HepG2 (cell line): ENCODE measurements at regions of chr4 and their contacts with region 1.

Region 1: DNA sequence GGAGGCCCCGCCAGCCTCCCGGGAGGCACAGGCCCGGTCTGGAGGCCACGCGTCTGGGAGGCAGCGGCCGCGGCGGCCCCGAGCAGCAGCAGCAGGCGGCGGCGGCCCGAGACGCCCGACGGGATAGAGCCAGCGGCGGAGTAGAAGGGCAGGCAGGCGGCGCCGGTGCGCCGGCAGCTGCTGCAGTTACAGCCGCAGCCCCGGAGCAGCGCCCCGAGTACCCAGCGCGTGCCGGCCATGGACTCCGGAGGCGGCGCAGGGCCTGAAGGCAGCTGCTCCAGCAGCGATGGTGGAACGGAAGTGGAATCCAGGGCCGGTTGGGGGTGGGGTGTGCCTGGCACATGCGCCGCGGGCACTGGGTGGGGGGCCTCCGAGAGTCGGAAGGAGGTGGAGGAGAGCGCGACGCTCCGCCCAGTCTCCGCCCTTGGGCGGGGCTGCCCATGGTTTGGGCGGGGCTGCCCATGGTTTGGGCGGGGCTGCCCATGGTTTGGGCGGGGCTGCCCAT is at the start of gene GRSF1:
- DNase-seq: peak; percentile 79
- ATAC-seq: peak; percentile 91
- H3K4me3 ChIP-seq: peak within 1 kb of the TSS; percentile 88 to 91 (median 90)
- H3K27ac ChIP-seq: peak within 1 kb of the TSS; percentile 75
- H3K4me1 ChIP-seq: peaks cover 31% of the 10 kb centered on the region
- H3K27me3 ChIP-seq: no peaks in the 10 kb centered on the region
- CTCF ChIP-seq: 0 out of 2 replicates have a peak, but pooled peaks have one; percentile 13
- EP300 ChIP-seq: no peak
- POLR2A ChIP-seq: peak; percentile 89 to 92
- RAD21 ChIP-seq: peak; percentile 43; the same call in 1 of the 2 replicates
- total RNA-seq, gene GRSF1: 103 and 129 TPM in 2 replicates

Region 2: GRCh38 chr4:70651864-70652506 is 187.7 kb before region 1 on chr4:
- CTCF ChIA-PET with region 1: no interaction called
- POLR2A ChIA-PET with region 1: no interaction called
- in situ Hi-C with region 1: no loop called
- intact Hi-C with region 1: loop called (anchors 5 kb)
- DNase-seq: peak; percentile 27
- ATAC-seq: peak; percentile 79
- H3K4me3 ChIP-seq: no peak overlapping the region; a peak in 1 of 6 replicates
- H3K27ac ChIP-seq: no peak overlapping the region
- H3K4me1 ChIP-seq: peaks cover 7% of the 10 kb centered on the region; the same call in 1 of the 2 replicates
- H3K27me3 ChIP-seq: peaks cover 0 to 3% of the 10 kb centered on the region in 2 experiments; a peak in 1 of 5 replicates
- CTCF ChIP-seq: peak; percentile 70
- EP300 ChIP-seq: no peak
- POLR2A ChIP-seq: no peak
- RAD21 ChIP-seq: peak; percentile 58

Region 3: DNA sequence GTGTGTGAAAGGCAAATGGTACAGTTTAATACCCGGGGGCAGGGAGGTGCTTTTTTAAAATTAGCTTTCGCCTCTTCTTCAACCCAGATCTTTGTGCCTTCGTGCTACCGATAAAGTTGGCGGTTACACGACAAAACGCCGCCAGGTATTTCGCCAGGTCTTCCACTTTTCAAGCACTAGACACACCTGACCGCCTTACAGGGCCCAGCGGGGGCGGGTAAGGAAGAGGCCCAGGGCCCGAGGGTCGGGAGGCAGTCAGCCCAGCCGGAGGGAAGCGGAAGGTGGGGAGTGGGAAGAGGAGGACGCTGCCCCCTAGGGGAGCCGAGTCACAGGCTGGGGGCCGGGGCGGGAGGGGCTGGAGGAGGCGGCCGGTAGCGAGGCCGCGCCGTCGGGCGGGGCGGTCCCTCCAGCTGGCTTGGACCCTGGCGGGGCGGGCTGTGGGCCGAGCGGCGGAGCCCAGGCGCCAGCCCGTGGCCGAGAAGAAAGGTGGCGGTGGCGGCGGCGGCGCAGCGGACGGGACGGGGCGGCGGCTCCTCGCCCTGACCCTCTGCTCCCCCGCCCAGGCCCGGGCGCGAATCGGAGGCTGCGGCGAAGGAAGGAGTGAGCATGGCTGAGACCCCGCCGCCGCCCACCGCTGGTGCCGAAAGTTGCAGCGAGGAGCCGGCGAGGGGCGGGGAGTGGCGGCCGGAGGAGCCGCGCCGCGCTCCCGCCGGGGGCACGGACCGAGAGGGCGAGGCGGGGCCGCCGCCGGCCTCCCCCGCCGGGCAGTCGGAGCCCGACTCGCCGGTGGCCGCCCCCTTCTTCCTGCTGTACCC is 135.1 kb before region 1 on chr4:
- CTCF ChIA-PET with region 1: no interaction called
- POLR2A ChIA-PET with region 1: interaction called, 4 read pairs
- in situ Hi-C with region 1: no loop called
- intact Hi-C with region 1: loop called (anchors 5 kb)
- DNase-seq: peak; percentile 67
- ATAC-seq: peak; percentile 85
- H3K4me3 ChIP-seq: peak overlapping the region; percentile 72 to 88 (median 80)
- H3K27ac ChIP-seq: peak overlapping the region; percentile 91
- H3K4me1 ChIP-seq: peaks cover 42% of the 10 kb centered on the region
- H3K27me3 ChIP-seq: no peaks in the 10 kb centered on the region; a peak in 1 of 5 replicates
- CTCF ChIP-seq: peak; percentile 85
- EP300 ChIP-seq: no peak
- POLR2A ChIP-seq: peak; percentile 56 to 75; a peak in 3 of 4 replicates
- RAD21 ChIP-seq: peak; percentile 12; the same call in 1 of the 2 replicates

Region 4: GRCh38 chr4:70721747-70722146 is 117.9 kb before region 1 on chr4 and contains the start of gene RUFY3:
- CTCF ChIA-PET with region 1: no interaction called
- POLR2A ChIA-PET with region 1: no interaction called
- in situ Hi-C with region 1: no loop called
- intact Hi-C with region 1: no loop called
- DNase-seq: no peak
- ATAC-seq: no peak
- H3K4me3 ChIP-seq: no peak within 1 kb of the TSS
- H3K27ac ChIP-seq: no peak within 1 kb of the TSS
- H3K4me1 ChIP-seq: peaks cover 24% of the 10 kb centered on the region
- H3K27me3 ChIP-seq: no peaks in the 10 kb centered on the region
- CTCF ChIP-seq: no peak
- EP300 ChIP-seq: no peak
- POLR2A ChIP-seq: no peak
- RAD21 ChIP-seq: no peak
- total RNA-seq, gene RUFY3: 21.3 and 25.3 TPM in 2 replicates

Region 5: DNA sequence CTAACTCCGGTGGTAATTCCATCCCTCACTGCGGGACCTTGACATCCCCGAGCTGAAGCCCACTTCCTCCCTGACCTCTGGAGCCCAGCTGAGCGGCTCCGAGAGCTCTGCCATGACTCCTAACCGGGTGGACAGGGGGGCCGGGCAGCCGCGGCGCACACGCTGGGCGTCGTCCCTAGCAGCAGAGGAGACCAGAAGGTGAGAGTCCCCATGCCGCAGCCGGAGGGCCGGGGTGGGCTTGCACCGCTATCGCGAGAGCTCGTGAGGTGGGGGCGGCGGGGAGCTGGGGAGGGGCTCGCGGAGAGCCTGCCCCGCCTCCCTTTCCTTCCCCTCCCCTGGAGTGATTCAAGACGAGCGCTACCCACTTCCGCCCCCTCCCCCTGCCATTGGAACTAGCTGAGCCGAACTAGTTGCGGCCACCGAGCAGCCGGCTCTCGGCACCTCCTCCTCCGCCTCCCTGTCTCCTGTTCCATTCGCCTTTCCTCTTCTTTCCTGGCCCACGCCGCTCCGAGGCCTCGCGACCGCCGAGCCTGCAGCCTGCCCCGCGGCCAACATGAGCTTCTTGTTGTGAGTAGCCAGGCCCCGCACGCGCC is 62.4 kb after region 1 on chr4 and contains the start of gene MOB1B:
- CTCF ChIA-PET with region 1: no interaction called
- POLR2A ChIA-PET with region 1: interaction called, 9 read pairs
- in situ Hi-C with region 1: no loop called
- intact Hi-C with region 1: loop called (anchors 5 kb)
- DNase-seq: peak; percentile 77
- ATAC-seq: peak; percentile 94
- H3K4me3 ChIP-seq: peak within 1 kb of the TSS; percentile 90 to 97 (median 94)
- H3K27ac ChIP-seq: peak within 1 kb of the TSS; percentile 70
- H3K4me1 ChIP-seq: peaks cover 17% of the 10 kb centered on the region
- H3K27me3 ChIP-seq: no peaks in the 10 kb centered on the region; a peak in 1 of 5 replicates
- CTCF ChIP-seq: peak; percentile 48
- EP300 ChIP-seq: no peak
- POLR2A ChIP-seq: peak; percentile 43 to 82; a peak in 3 of 4 replicates
- RAD21 ChIP-seq: 0 out of 2 replicates have a peak, but pooled peaks have one; percentile 8
- total RNA-seq, gene MOB1B: 4.0 and 6.8 TPM in 2 replicates

Region 6: DNA sequence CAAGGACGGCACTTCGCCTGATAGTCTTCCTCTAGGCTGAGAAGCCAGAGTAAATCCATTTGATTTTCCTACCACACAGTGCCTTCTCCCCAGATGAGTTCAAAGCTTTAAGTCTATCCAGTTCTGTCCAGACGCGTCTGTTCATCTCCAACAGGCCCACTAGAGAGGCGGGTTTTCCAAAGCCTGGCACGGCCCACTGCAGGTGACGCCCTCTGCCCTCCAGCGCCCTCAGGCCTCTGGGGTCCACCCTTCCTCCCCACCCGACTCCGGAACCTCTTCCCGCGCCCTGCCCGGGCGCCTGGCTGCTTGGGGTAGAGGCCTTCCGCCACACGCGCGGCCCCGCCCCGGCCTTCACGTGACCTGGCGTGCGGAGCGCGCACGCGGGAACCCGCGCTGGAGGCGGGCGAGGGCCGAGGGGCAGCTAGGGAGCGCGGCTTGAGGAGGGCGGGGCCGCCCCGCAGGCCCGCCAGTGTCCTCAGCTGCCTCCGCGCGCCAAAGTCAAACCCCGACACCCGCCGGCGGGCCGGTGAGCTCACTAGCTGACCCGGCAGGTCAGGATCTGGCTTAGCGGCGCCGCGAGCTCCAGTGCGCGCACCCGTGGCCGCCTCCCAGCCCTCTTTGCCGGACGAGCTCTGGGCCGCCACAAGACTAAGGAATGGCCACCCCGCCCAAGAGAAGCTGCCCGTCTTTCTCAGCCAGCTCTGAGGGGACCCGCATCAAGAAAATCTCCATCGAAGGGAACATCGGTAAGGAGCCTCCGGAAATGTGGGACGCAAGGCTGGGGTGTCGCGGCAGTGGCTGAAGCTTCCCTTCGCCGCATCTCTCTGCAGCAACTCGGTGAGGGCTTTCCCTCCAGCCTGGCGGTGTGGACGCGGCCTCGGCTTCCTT is 153.8 kb after region 1 on chr4 and contains the start of gene DCK:
- CTCF ChIA-PET with region 1: no interaction called
- POLR2A ChIA-PET with region 1: interaction called, 3 read pairs
- in situ Hi-C with region 1: loop called (anchors 10 kb)
- intact Hi-C with region 1: loop called (anchors 5 kb)
- DNase-seq: peak; percentile 85
- ATAC-seq: peak; percentile 93
- H3K4me3 ChIP-seq: peak within 1 kb of the TSS; percentile 67 to 92 (median 89)
- H3K27ac ChIP-seq: peak within 1 kb of the TSS; percentile 83
- H3K4me1 ChIP-seq: peaks cover 43% of the 10 kb centered on the region
- H3K27me3 ChIP-seq: no peaks in the 10 kb centered on the region
- CTCF ChIP-seq: peak; percentile 25; the same call in 1 of the 2 replicates
- EP300 ChIP-seq: peak; percentile 8 to 13; a peak in 2 of 4 replicates
- POLR2A ChIP-seq: peak; percentile 81 to 82
- RAD21 ChIP-seq: peak; percentile 57; the same call in 1 of the 2 replicates
- total RNA-seq, gene DCK: 21.8 and 33.5 TPM in 2 replicates